Activated B cell treated with CpG ODN at 0.5 μM for 24 hours (primary cell): ENCODE measurements at regions of chr17 and their contacts with region 1.

Region 1: DNA sequence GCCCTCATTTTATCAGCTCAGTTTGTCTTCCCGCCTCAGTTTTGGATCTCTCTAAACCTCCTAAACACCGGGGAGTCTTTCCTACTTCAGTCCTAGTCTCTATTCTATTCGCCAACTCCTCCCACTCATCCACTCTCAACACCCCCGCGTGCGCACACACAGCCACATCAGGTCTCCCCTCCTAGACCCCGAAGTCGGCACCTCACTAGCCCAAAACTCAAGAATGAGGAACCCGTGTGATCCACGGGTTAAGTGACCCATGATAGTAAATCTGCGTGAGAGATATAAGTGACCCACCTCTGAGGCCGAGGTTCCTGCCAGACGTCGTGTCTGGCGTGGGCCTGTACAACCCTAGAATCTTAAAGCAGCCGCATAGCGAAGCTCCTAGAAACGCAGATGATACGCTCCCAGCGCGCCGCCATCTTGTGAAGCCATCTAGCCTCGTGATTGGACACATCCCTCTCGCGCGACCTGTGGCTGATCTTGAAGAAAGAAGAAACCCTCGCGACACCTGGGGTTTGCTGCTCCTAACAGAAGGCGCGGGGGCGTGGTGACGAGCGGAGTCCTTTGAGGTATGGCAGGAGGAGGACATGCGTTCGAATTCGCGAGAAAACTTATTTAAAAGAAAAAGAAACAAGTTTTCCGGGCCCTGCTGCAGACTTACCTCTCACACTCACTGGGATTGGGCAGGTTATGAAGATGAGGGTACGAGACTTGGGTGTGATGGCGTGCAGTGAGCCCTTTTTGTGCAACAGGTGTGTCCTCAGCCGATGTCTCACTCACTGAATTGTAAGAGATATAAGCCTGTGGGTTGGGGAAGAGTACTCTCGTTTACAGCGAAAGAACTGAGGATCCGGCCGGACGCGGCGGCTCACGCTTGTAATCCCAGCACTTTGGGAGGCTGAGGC is at the start of gene METTL16:
- DNase-seq: peak; percentile 84
- ATAC-seq: peak; percentile 99
- H3K4me3 Mint-ChIP-seq: no peak within 1 kb of the TSS
- H3K27ac Mint-ChIP-seq: peak within 1 kb of the TSS; percentile 36
- H3K4me1 Mint-ChIP-seq: peaks cover 10% of the 10 kb centered on the region
- H3K27me3 Mint-ChIP-seq: no peaks in the 10 kb centered on the region
- CTCF ChIP-seq: no peak
- total RNA-seq, gene METTL16: 49.4 and 57.2 TPM in 2 replicates

Region 2: GRCh38 chr17:2101448-2102257 is 410.1 kb before region 1 on chr17:
- CTCF ChIA-PET with region 1: no interaction called
- POLR2A ChIA-PET with region 1: no interaction called
- intact Hi-C with region 1: no loop called
- DNase-seq: no peak
- ATAC-seq: peak; percentile 69
- H3K4me3 Mint-ChIP-seq: no peak overlapping the region
- H3K27ac Mint-ChIP-seq: peak overlapping the region; percentile 14
- H3K4me1 Mint-ChIP-seq: peaks cover 12% of the 10 kb centered on the region
- H3K27me3 Mint-ChIP-seq: no peaks in the 10 kb centered on the region
- CTCF ChIP-seq: no peak

Region 3: DNA sequence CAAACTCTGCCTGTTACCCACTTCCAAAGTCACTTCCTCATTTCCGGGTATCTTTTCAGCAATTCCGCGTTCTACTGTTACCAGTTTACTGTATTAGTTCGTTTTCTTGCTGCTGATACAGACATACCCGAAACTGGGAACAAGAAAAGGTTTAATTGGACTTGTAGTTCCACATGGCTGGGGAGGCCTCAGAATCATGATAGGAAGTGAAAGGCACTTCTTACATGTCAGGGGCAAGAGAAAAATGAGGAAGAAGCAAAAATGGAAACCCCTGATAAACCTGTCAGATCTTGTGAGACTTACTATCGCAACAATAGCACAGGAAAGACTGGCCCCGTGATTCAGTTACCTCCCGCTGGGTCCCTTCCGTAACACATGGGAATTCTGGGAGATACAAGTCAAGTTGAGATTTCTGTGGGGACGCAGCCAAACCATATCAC is 112.6 kb after region 1 on chr17:
- CTCF ChIA-PET with region 1: no interaction called
- POLR2A ChIA-PET with region 1: no interaction called
- intact Hi-C with region 1: loop called (anchors 1 kb)
- DNase-seq: no peak
- ATAC-seq: peak; percentile 81
- H3K4me3 Mint-ChIP-seq: peak overlapping the region; percentile 74
- H3K27ac Mint-ChIP-seq: peak overlapping the region; percentile 88
- H3K4me1 Mint-ChIP-seq: peaks cover 74% of the 10 kb centered on the region
- H3K27me3 Mint-ChIP-seq: no peaks in the 10 kb centered on the region
- CTCF ChIP-seq: no peak

Region 4: GRCh38 chr17:2672026-2672425 is 160.3 kb after region 1 on chr17:
- CTCF ChIA-PET with region 1: interaction called, 5 read pairs
- POLR2A ChIA-PET with region 1: no interaction called
- intact Hi-C with region 1: loop called (anchors 1 kb)
- DNase-seq: no peak
- ATAC-seq: no peak
- H3K4me3 Mint-ChIP-seq: no peak overlapping the region
- H3K27ac Mint-ChIP-seq: no peak overlapping the region
- H3K4me1 Mint-ChIP-seq: peaks cover 2% of the 10 kb centered on the region
- H3K27me3 Mint-ChIP-seq: no peaks in the 10 kb centered on the region
- CTCF ChIP-seq: no peak

Region 5: GRCh38 chr17:2711601-2712299 is 200.0 kb after region 1 on chr17 and contains the start of gene CLUH:
- CTCF ChIA-PET with region 1: no interaction called
- POLR2A ChIA-PET with region 1: no interaction called
- intact Hi-C with region 1: loop called (anchors 1 kb)
- DNase-seq: peak; percentile 96
- ATAC-seq: peak; percentile 83
- H3K4me3 Mint-ChIP-seq: peak within 1 kb of the TSS; percentile 90
- H3K27ac Mint-ChIP-seq: peak within 1 kb of the TSS; percentile 83
- H3K4me1 Mint-ChIP-seq: peaks cover 37% of the 10 kb centered on the region
- H3K27me3 Mint-ChIP-seq: no peaks in the 10 kb centered on the region
- CTCF ChIP-seq: no peak
- total RNA-seq, gene CLUH: 101 and 115 TPM in 2 replicates